AG04450 (cell line): ENCODE measurements at regions of chr11 and their contacts with region 1.

Region 1: GRCh38 chr11:17384002-17384511 is 4.4 kb downstream of the KCNJ11 start:
- DNase-seq: peak; percentile 65
- H3K4me3 ChIP-seq: no peak overlapping the region
- H3K27ac ChIP-seq: no peak overlapping the region
- H3K27me3 ChIP-seq: peaks cover 6% of the 10 kb centered on the region
- CTCF ChIP-seq: peak; percentile 92

Region 2: GRCh38 chr11:17221968-17222367 is 162.1 kb before region 1 on chr11:
- CTCF ChIA-PET with region 1: interaction called, 12 read pairs
- POLR2A ChIA-PET with region 1: no interaction called
- DNase-seq: no peak
- H3K4me3 ChIP-seq: no peak overlapping the region
- H3K27ac ChIP-seq: no peak overlapping the region
- H3K27me3 ChIP-seq: no peaks in the 10 kb centered on the region
- CTCF ChIP-seq: no peak

Region 3: DNA sequence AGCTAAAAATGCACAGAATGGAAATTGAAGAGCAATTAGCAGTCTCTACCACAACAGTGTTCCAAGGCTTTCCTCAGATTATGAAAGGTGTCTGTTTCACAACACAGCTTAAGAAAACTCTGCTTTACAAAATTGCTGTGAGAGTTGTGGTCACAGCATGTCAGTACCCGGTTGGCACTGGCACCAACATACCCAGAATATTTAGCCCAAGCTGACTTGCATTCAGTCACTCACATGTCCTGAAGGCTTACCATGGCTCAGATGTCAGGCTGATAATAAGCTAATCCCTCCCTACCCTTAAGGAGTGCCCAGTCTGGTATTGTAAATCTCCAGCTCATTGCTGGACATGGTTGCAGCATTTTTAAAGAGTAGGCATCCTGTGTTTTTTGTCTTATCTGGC is 17.6 kb before region 1 on chr11:
- CTCF ChIA-PET with region 1: interaction called, 41 read pairs
- POLR2A ChIA-PET with region 1: interaction called, 4 read pairs
- DNase-seq: no peak
- H3K4me3 ChIP-seq: no peak overlapping the region
- H3K27ac ChIP-seq: no peak overlapping the region
- H3K27me3 ChIP-seq: no peaks in the 10 kb centered on the region
- CTCF ChIP-seq: no peak

Region 4: GRCh38 chr11:17423533-17424310 is 39.7 kb after region 1 on chr11:
- CTCF ChIA-PET with region 1: no interaction called
- POLR2A ChIA-PET with region 1: no interaction called
- DNase-seq: no peak
- H3K4me3 ChIP-seq: no peak overlapping the region
- H3K27ac ChIP-seq: no peak overlapping the region
- H3K27me3 ChIP-seq: peaks cover 28% of the 10 kb centered on the region
- CTCF ChIP-seq: no peak

Region 5: DNA sequence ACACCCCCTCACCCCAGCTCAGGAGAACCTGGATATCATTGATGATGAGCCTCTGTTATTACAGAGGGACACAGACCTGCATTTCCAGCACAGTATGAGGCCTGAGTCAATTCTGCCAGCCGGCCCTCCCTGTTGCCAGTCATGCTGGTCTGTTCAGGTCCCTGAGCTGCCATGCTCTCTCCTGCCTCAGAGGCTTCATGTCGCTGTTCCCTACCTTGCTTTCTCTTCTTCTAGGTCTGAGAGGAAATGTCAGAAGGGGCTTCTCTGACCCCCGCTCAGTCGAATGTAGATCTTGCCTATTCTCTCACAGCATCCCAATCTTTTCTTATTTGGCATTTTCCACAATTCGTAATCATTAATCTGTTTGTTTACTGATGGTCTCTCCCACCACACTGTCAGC is 114.4 kb after region 1 on chr11:
- CTCF ChIA-PET with region 1: interaction called, 48 read pairs
- POLR2A ChIA-PET with region 1: no interaction called
- DNase-seq: no peak
- H3K4me3 ChIP-seq: no peak overlapping the region
- H3K27ac ChIP-seq: no peak overlapping the region
- H3K27me3 ChIP-seq: peaks cover 2% of the 10 kb centered on the region
- CTCF ChIP-seq: peak; percentile 33; the same call in 1 of the 2 replicates

Region 6: DNA sequence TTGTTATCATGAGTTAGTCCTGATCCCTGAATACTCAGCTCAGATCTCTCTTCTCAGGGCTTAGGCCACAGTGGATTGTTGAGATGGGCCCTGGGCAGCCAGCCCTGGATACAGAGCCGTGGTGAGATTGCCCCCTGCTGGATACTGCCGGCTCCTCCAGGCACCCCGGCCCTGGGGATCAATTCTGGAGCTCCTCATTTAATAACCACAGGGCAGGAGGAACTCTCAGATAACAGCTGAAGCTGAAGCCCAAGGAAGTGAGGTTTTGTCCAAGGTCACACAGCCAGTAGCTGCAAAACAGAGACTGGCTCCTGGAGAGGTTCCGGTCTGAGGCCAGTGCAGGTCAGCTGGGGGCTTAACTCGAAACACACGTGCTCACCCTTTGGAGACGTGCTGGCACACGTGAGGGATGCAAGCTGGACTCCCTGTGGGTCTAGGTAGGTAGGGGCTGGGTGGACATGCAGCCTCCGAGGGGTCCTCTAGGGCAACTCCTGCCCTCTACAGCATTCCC is 144.2 kb after region 1 on chr11:
- CTCF ChIA-PET with region 1: interaction called, 39 read pairs
- POLR2A ChIA-PET with region 1: no interaction called
- DNase-seq: no peak
- H3K4me3 ChIP-seq: no peak overlapping the region
- H3K27ac ChIP-seq: no peak overlapping the region
- H3K27me3 ChIP-seq: peaks cover 11% of the 10 kb centered on the region
- CTCF ChIP-seq: peak; percentile 71